ENCODE measurements at regions of chr14 and their contacts with region 1.

Region 1: DNA sequence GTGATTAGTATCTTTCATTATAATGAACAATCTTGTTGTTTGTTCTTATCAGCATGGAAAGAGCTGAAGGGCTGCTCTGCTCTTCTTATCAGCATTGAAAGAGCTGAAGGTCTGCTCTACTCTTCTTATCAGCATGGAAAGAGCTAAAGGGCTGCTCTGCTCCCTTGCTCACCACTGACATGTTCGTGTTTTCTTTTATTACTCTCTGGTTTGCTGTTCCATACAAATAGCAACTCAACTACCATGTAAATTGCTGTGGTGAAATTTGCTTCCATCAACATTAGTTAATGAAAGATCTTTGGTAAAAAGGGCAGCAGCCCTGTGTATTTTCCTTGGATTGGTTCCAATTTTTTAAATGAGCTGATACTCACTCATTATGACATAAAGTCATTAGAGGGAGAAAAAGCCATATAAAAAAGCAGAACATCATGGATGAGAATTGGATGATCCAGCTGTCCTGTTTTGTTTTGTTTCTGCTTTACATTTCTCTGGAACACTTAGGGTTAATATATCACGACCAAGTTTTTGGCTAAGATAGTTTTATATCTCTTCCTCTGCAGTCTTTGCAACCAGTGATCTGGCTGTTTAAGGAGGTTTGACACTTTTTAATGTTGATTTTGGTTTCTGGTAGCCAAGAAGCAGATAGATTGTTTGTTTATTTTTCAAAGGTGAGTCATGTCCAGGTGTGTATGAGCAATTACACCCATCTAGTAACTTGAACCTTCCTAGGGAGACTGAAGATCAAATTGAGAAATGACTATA is 356.6 kb downstream of the CEP128 start:
- DNase-seq: peak in 1 of 2 experiments; percentile 95
- H3K4me3 ChIP-seq: no peak overlapping the region
- H3K27ac ChIP-seq: peak overlapping the region; percentile 76
- H3K4me1 ChIP-seq: peaks cover 29% of the 10 kb centered on the region
- H3K27me3 ChIP-seq: no peaks in the 10 kb centered on the region
- CTCF ChIP-seq: no peak

Region 2: DNA sequence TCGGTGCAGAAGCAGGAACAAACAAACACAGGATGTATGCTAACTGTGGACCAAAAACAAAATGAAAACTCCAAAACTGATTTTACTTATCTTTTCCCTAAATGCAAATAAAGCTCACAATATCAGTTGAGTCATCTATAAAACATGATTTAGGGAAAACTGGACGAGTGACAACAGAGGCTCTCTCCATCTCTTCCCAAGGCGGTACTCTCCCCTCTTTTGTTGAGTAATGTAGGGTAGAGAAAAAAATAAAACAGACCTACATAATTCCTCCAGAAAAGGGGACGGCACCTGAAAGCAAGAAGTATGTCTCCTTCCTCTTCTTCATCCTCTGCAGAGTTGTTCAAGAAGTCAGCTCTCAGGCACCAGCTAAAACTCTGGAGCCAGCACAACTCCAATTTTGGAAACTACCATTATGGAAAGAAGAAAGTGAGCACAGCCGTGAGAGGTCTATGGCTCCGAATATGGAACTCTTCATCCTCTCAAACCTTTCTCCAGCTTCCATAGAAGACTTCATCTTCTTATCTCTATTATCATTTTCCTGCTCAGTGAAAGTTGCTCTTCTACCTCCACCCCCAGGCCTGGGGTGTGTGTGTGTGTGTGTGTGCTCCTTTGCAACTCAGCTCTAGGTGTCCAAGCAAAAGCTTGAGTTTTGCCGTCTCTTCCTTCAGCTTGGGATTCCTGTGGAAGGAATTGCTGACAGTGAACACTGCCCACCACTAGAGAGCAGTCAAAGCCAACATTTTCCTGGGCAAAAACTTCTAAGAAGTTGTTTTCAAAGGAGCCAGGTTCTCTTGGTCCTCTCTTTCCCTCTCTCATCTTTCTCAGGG is 529.0 kb before region 1 on chr14:
- CTCF ChIA-PET with region 1: no interaction called
- POLR2A ChIA-PET with region 1: no interaction called
- intact Hi-C with region 1: loop called (anchors 1 kb)
- DNase-seq: peak; percentile 47 to 55
- H3K4me3 ChIP-seq: no peak overlapping the region
- H3K27ac ChIP-seq: no peak overlapping the region
- H3K4me1 ChIP-seq: no peaks in the 10 kb centered on the region
- H3K27me3 ChIP-seq: no peaks in the 10 kb centered on the region
- CTCF ChIP-seq: peak; percentile 82

Region 3: GRCh38 chr14:80425686-80426085 is 159.2 kb before region 1 on chr14:
- CTCF ChIA-PET with region 1: no interaction called
- POLR2A ChIA-PET with region 1: no interaction called
- intact Hi-C with region 1: loop called (anchors 2 kb)
- DNase-seq: peak; percentile 54 to 99
- H3K4me3 ChIP-seq: no peak overlapping the region
- H3K27ac ChIP-seq: peak overlapping the region; percentile 92
- H3K4me1 ChIP-seq: peaks cover 29% of the 10 kb centered on the region
- H3K27me3 ChIP-seq: no peaks in the 10 kb centered on the region
- CTCF ChIP-seq: no peak

Region 4: GRCh38 chr14:80567996-80568431 is 16.9 kb before region 1 on chr14:
- CTCF ChIA-PET with region 1: no interaction called
- POLR2A ChIA-PET with region 1: interaction called, 7 read pairs
- intact Hi-C with region 1: loop called (anchors 2 kb)
- DNase-seq: peak; percentile 38 to 86
- H3K4me3 ChIP-seq: no peak overlapping the region
- H3K27ac ChIP-seq: peak overlapping the region; percentile 62
- H3K4me1 ChIP-seq: peaks cover 30% of the 10 kb centered on the region
- H3K27me3 ChIP-seq: no peaks in the 10 kb centered on the region
- CTCF ChIP-seq: no peak

Region 5: GRCh38 chr14:80653956-80654355 is 69.0 kb after region 1 on chr14:
- CTCF ChIA-PET with region 1: no interaction called
- POLR2A ChIA-PET with region 1: interaction called, 14 read pairs
- intact Hi-C with region 1: no loop called
- DNase-seq: no peak
- H3K4me3 ChIP-seq: no peak overlapping the region
- H3K27ac ChIP-seq: no peak overlapping the region
- H3K4me1 ChIP-seq: no peaks in the 10 kb centered on the region
- H3K27me3 ChIP-seq: no peaks in the 10 kb centered on the region
- CTCF ChIP-seq: no peak

Region 6: GRCh38 chr14:80678436-80678835 is 93.5 kb after region 1 on chr14:
- CTCF ChIA-PET with region 1: no interaction called
- POLR2A ChIA-PET with region 1: no interaction called
- intact Hi-C with region 1: no loop called
- DNase-seq: no peak
- H3K4me3 ChIP-seq: no peak overlapping the region
- H3K27ac ChIP-seq: no peak overlapping the region
- H3K4me1 ChIP-seq: no peaks in the 10 kb centered on the region
- H3K27me3 ChIP-seq: no peaks in the 10 kb centered on the region
- CTCF ChIP-seq: no peak

Region 7: DNA sequence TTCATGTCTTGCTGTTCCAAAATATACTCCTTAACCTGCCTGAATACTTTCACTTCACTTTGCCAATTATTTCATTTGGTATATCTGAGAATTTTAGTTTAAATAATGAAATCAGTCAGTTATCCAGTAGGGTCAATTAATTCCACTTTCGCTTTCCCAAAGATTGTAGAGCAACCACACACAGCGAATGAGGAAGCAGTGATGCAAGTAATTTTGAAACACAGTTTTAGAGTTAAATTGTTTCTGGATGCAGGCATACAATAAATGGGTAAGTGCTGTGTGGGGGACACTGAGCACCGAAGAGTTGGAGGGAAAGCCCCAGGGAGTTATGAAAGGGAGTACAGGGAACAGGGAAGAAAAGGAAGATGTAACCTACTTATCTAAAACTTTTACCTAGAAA is 433.3 kb after region 1 on chr14:
- CTCF ChIA-PET with region 1: no interaction called
- POLR2A ChIA-PET with region 1: no interaction called
- intact Hi-C with region 1: no loop called
- DNase-seq: no peak
- H3K4me3 ChIP-seq: no peak overlapping the region
- H3K27ac ChIP-seq: no peak overlapping the region
- H3K4me1 ChIP-seq: no peaks in the 10 kb centered on the region
- H3K27me3 ChIP-seq: peaks cover 9% of the 10 kb centered on the region
- CTCF ChIP-seq: no peak

Measured in PC-9 (cell line).